Upper lobe of right lung (tissue), 1 donor: ENCODE measurements at regions of chr2 and their contacts with region 1.

Region 1: GRCh38 chr2:149017116-149017985 is 21.1 kb upstream of the LYPD6B start:
- DNase-seq: no peak
- ATAC-seq: peak; percentile 84
- H3K4me3 ChIP-seq: no peak overlapping the region
- H3K27ac ChIP-seq: no peak overlapping the region
- H3K4me1 ChIP-seq: no peaks in the 10 kb centered on the region
- H3K27me3 ChIP-seq: no peaks in the 10 kb centered on the region
- CTCF ChIP-seq: peak; percentile 92

Region 2: DNA sequence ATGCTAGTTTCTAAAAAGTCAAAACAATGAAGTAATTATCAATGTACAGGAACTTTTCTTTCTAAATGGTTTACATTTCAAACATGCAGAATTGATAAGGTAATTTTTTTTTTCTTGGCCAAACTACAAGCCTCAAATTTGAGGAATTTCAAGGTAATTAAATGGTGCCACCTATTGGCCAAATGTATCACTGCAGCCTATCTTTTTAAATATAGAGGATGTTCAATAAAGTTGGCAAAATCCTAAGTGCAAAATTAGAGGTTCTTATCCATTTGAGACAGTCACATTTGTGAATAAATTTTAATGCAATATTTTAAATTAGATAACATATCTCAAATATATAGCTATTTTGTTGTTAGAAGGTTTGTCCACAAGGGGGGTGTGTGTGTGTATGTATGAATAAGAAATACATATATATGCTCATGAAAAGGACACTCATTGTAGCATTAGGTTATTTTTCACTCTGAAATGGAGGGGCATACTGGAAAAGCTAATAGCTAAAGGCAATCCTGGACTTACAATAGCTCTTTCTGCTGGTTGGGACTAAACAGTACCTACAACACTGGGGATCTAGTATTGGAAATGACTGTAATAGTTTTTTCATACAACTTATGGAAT is 544.1 kb after region 1 on chr2:
- intact Hi-C with region 1: loop called (anchors 10 kb)
- DNase-seq: no peak
- ATAC-seq: no peak
- H3K4me3 ChIP-seq: no peak overlapping the region
- H3K27ac ChIP-seq: no peak overlapping the region
- H3K4me1 ChIP-seq: no peaks in the 10 kb centered on the region
- H3K27me3 ChIP-seq: no peaks in the 10 kb centered on the region
- CTCF ChIP-seq: peak; percentile 94